ENCODE measurements at regions of chr12 and their contacts with region 1.

Region 1: DNA sequence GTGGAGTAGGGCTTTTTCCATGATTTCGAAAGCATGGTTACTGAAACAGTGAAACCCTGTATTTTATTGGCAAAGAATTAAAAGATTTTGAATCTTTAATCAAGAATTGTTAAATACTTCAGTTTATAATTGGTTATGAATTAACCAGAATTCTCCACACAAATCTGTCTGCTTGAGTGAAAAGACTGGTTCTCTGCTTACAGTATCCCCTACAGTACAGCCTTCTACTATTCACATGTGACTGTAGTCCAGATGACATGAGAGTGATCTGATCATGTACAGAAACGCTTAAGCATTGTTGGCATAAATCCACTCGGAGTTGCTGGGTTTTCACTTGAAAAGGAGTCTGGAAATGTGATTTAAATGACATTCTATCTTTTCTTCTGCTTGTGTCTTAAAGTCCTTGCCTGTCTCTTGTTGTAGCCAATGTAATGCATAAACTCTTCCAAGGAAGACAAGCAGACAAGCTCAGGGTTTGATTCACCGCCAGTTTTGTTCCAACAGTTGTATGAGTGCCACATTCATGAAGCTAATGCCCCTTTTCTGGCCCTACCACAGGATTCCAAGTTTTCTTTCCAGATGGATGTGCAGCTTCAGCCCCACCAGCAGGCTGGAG is 222.0 kb upstream of the LRIG3 start:
- DNase-seq: no peak
- ATAC-seq: no peak

Region 2: DNA sequence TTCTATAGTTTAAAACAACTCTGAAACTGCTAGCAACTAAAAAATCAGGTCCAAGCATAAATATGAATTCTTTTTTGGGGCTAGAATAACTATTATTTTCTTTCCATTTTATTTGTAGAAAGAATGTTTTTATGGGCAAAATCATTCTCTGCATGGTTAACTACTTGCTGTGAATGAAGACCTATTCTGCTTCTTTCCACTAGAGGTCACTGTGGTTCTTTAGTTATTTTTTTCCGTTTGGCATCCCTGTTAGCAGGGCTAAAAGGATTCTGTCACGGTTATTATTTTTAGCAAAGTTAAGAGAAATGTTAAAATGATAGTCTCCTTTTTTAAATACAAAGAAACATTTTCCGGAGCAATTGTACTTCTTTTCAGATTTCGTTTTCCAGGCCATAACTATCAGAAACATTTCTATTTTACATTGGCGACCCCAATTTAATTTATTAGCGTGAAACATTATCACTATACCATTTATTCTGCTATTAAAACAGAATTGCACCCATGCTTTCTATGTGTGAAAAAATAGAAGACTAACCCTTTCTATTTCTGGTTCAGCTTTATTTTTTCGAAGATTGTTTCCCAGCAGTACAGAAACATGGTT is 796.2 kb before region 1 on chr12:
- intact Hi-C with region 1: loop called in 1 of 2 experiments (anchors 5 kb)
- DNase-seq: no peak
- ATAC-seq: peak in 1 of 2 donors; percentile 61

Region 3: DNA sequence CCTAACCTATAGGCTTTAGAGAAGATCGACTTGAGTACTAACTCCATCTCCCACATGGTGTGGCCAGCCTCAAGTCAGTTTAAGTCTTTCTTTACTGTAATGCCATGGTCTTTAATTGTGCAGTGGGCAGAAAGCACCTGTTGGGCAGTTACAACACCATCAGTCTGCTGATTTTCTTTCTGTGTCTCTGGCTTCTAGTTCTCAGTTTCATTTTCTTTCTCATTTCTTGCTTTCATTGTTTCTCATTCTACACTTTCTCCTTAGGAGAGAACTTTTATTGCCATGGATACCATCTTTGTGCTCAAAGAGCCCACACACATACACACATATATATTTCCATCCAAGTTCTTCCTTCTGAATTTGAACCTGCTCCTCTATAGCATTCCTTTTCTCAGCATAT is 357.5 kb after region 1 on chr12:
- intact Hi-C with region 1: no loop called
- DNase-seq: no peak
- ATAC-seq: no peak